ENCODE measurements at regions of chr16 and their contacts with region 1.

Region 1: DNA sequence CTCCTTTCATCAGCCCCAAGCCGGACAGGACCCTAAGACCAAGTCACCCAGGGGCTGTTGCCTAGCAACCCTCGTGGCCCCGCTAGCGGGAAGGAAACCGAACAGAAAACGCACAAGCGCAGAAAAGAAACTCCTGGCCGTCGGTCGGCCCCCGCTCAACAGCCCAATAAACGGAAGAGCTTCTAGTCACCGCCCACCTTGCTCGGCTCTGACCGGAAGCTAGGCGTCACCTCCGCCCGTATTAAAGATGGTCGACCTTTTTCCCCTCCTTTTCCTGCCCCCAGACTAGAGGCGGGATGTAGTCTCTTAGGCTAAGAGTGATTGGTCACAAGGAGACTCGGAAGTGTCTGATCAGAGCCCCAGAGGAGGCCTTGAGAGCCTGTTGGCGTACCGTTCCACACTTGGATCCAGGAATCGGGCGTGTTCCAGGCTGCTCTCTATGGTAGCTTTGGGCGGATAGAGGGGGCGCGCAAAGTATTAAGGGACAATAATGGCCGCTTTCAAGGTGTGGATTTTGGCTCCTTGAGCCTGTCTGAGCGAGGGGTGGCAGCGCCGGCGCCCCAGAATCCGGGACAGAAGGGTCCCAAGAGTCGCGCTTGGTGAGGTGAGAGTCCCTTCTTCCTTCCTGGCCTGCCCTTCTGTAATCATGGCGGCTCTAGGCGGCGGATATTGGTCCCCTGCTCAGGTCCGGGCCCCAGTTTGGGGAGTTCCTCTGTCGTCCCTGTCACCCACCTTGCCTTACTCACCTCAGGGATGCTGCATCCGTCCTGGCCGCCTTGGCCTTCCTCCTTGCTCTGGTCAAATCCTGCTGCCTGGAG is at the starts of genes DHX38 and TXNL4B:
- DNase-seq: peak; percentile 96
- H3K4me3 Mint-ChIP-seq: peak within 1 kb of the TSS; percentile 96
- H3K27ac Mint-ChIP-seq: peak within 1 kb of the TSS; percentile 95
- H3K4me1 Mint-ChIP-seq: peaks cover 35% of the 10 kb centered on the region
- H3K27me3 Mint-ChIP-seq: no peaks in the 10 kb centered on the region
- total RNA-seq, gene DHX38: 78.6 to 79.9 TPM
- total RNA-seq, gene TXNL4B: 22.0 to 24.1 TPM

Region 2: DNA sequence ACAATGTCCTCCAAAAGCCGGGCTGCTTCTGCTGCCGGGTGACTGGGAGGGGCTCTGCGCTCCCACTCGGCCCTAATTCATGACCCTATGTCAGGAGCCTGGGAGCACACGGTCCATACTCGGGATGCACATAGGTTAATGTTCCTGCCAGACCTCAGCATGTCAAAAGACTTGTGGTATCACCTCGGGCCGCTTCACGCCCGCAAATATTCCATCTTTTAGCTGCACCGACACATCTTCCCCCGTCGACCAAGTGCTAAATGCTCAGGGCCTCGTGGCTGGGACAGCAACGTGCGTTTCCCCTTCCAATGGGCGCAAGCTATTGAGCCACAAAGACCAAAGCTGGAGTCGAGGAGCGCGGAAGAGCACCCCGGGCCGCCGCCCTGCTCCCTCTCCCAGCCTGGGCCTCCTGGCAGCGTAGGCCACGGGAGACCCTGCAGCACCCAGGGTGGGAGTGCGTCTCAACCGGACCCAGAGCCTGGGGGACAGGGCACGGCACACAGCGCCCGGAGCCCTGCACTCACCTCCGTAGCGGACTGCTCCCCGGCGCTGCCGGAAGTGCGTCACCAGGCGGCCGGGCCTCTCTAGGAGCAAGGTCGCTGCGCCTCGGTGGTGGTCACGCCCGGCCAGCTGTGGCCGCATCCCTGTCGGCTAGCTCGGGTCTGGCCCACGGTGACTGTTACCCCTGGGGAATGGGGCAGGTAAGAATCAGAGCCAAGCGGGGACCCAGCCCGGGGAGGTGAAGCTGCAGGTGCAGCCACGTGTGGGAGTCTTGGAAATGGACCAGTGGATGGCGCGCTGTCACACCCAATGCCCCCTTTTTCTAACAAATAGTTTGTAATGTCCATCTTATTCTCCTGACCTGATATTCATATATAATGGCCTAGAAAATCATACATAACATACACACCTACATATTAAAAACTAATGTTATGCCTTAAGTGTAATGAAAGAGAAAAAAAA is 631.7 kb before region 1 on chr16 and contains the start of gene ZNF23:
- CTCF ChIA-PET with region 1: no interaction called
- intact Hi-C with region 1: loop called (anchors 2 kb)
- DNase-seq: peak; percentile 78
- H3K4me3 Mint-ChIP-seq: peak within 1 kb of the TSS; percentile 89
- H3K27ac Mint-ChIP-seq: peak within 1 kb of the TSS; percentile 91
- H3K4me1 Mint-ChIP-seq: peaks cover 18% of the 10 kb centered on the region
- H3K27me3 Mint-ChIP-seq: no peaks in the 10 kb centered on the region
- total RNA-seq, gene ZNF23: 6.9 to 7.1 TPM

Region 3: DNA sequence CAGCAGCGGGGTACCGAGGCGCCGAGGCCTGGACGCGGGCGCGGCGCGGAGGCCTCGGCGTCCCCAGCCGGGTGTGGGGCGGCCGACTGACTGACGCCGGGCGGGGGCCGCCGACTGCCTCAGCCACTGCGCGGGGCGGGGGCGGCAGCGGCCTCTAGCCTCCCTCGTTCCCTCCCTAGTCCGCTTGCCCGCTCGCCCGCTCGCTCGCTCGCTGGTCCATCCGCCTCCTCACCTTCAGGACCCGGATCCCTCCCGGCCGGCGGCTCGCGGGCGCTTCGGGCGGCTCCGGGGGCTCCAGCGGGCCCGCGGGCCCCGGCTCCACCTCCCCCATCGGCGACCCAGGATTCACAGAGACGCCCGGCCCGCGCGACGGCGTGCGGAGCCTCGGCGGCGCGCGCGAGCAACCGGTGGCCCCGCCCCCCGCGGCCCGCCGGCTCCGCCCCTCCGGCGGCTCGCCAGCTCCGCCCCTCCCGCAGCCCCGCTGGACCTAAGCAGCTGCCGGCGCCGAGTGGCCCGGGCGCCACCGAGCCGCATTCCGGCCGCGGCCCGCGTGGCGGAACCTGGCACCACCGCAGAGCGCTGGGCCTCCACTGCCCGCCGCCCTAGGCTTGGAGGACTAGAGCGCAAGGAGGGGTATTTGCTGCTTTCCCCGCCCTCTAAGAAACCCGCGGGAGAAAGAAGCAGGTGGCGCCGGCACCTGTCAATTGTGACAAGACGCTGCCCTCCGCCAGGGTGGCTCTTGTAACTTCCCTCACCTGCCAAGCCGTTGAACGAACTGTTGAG is 369.9 kb before region 1 on chr16:
- CTCF ChIA-PET with region 1: no interaction called
- intact Hi-C with region 1: loop called (anchors 1 kb)
- DNase-seq: peak; percentile 74
- H3K4me3 Mint-ChIP-seq: peak overlapping the region; percentile 80
- H3K27ac Mint-ChIP-seq: no peak overlapping the region
- H3K4me1 Mint-ChIP-seq: peaks cover 18% of the 10 kb centered on the region
- H3K27me3 Mint-ChIP-seq: peaks cover 6% of the 10 kb centered on the region

Region 4: GRCh38 chr16:71883849-71884638 is 209.6 kb before region 1 on chr16 and contains the start of gene ZNF821:
- CTCF ChIA-PET with region 1: no interaction called
- intact Hi-C with region 1: loop called (anchors 5 kb)
- DNase-seq: peak; percentile 73
- H3K4me3 Mint-ChIP-seq: peak within 1 kb of the TSS; percentile 93
- H3K27ac Mint-ChIP-seq: peak within 1 kb of the TSS; percentile 80
- H3K4me1 Mint-ChIP-seq: peaks cover 46% of the 10 kb centered on the region
- H3K27me3 Mint-ChIP-seq: no peaks in the 10 kb centered on the region
- total RNA-seq, gene ZNF821: 5.9 TPM

Region 5: GRCh38 chr16:72066747-72067146 is 26.9 kb before region 1 on chr16:
- CTCF ChIA-PET with region 1: interaction called, 20 read pairs
- intact Hi-C with region 1: no loop called
- DNase-seq: no peak
- H3K4me3 Mint-ChIP-seq: no peak overlapping the region
- H3K27ac Mint-ChIP-seq: no peak overlapping the region
- H3K4me1 Mint-ChIP-seq: no peaks in the 10 kb centered on the region
- H3K27me3 Mint-ChIP-seq: no peaks in the 10 kb centered on the region

Measured in activated naive CD4-positive, alpha-beta T cell treated with anti-CD3 and anti-CD28 coated beads for 36 hours (primary cell).